ENCODE measurements at regions of chr17 and their contacts with region 1.

Region 1: DNA sequence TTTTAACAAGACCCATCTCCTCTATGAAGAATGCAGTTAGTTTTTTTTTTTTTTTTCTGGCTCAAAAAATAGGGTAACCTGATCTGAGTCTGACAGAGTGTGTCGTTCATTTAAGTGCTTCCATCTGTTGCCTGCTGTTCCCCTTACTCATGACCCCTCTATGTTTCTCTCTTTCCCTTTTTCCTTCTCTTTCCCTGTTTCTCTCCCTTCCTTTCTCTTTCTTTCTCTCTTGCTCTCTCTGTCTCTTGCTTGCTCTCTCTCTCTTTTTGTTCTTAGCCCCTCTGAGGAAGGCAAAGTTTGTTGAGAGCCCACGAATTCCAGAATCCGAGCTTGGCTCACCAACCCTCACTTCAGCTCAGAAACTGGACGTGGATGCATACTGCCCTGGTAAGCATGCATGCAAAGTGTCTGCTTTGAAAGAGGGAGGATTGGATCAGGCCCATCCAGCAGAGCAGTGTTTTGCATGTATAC is 185.0 kb downstream of the TANC2 start:
- DNase-seq: no peak
- ATAC-seq: no peak
- H3K4me3 ChIP-seq: no peak overlapping the region
- H3K27ac ChIP-seq: no peak overlapping the region
- H3K4me1 ChIP-seq: no peaks in the 10 kb centered on the region
- H3K27me3 ChIP-seq: no peaks in the 10 kb centered on the region
- CTCF ChIP-seq: no peak

Region 2: DNA sequence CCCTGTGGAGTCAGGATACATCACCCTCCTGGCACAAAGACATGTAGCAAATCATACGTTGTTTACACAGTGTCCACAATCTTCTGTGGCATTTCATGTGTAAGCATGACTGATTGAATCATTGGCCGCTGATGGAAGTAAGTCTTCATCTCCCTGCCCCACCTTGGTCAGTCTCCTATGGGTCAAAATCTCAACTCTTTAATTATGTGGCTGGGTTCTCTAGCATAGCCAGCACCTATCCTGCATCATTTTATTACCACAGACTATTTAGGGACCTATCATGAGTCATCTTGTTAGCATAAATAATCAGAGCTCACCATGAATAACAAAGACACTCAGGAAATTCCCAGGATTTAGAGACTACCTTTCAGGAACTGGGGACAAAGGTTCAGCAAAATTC is 169.1 kb before region 1 on chr17:
- CTCF ChIA-PET with region 1: no interaction called
- POLR2A ChIA-PET with region 1: no interaction called
- intact Hi-C with region 1: no loop called
- DNase-seq: peak; percentile 87
- ATAC-seq: peak; percentile 89
- H3K4me3 ChIP-seq: no peak overlapping the region
- H3K27ac ChIP-seq: peak overlapping the region; percentile 56
- H3K4me1 ChIP-seq: peaks cover 14% of the 10 kb centered on the region
- H3K27me3 ChIP-seq: no peaks in the 10 kb centered on the region
- CTCF ChIP-seq: no peak

Region 3: DNA sequence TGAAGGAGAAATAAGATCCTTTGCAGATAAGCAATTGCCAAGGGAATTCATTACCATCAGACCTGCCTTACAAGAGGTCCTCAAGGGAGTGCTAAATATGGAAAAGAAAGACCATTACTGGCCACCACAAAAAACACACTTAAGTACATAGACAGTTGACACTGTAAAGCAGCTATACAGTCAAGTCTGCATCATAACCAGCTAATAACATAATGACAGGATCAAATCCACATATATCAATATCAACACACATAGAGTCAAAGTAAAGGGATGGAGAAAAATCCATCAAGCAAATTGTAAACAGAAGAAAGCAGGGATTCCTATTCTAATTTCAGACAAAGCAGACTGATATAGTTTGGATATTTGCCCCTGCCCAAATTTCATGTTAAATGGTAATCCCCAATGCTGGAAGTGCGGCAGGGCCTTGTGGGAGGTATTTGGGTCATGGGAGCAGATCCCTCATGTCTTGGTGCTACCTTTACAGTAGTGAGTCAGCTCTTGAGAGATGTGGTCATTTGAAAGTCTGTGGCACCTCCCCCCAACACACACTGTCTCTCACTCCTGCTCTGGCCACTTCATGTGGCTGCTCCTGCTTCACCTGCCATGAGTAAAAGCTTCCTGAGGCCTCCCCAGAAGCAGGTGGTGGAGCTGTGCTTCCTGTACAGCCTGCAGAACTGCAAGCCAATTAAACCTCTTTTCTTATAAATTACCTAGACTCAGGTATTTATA is 152.2 kb before region 1 on chr17:
- CTCF ChIA-PET with region 1: no interaction called
- POLR2A ChIA-PET with region 1: no interaction called
- intact Hi-C with region 1: no loop called
- DNase-seq: peak; percentile 11
- ATAC-seq: no peak
- H3K4me3 ChIP-seq: no peak overlapping the region
- H3K27ac ChIP-seq: no peak overlapping the region
- H3K4me1 ChIP-seq: peaks cover 6% of the 10 kb centered on the region; the same call in 1 of the 2 replicates
- H3K27me3 ChIP-seq: no peaks in the 10 kb centered on the region
- CTCF ChIP-seq: no peak

Region 4: GRCh38 chr17:63075969-63076368 is 75.1 kb before region 1 on chr17:
- CTCF ChIA-PET with region 1: no interaction called
- POLR2A ChIA-PET with region 1: no interaction called
- intact Hi-C with region 1: no loop called
- DNase-seq: no peak
- ATAC-seq: no peak
- H3K4me3 ChIP-seq: no peak overlapping the region
- H3K27ac ChIP-seq: no peak overlapping the region
- H3K4me1 ChIP-seq: no peaks in the 10 kb centered on the region
- H3K27me3 ChIP-seq: no peaks in the 10 kb centered on the region
- CTCF ChIP-seq: no peak

Region 5: GRCh38 chr17:63345611-63346010 is 194.6 kb after region 1 on chr17:
- CTCF ChIA-PET with region 1: no interaction called
- POLR2A ChIA-PET with region 1: interaction called, 24 read pairs
- intact Hi-C with region 1: no loop called
- DNase-seq: no peak
- ATAC-seq: no peak
- H3K4me3 ChIP-seq: no peak overlapping the region
- H3K27ac ChIP-seq: no peak overlapping the region
- H3K4me1 ChIP-seq: 0 out of 2 replicates have a peak, but pooled peaks cover 7% of the 10 kb centered on the region
- H3K27me3 ChIP-seq: no peaks in the 10 kb centered on the region
- CTCF ChIP-seq: no peak

Measured in PC-3 (cell line).